ENCODE measurements at regions of chr7 and their contacts with region 1.

Region 1: GRCh38 chr7:46927136-46927810 is 654.6 kb downstream of the TNS3 start:
- DNase-seq: no peak

Region 2: GRCh38 chr7:46854958-46855491 is 72.2 kb before region 1 on chr7:
- intact Hi-C with region 1: no loop called
- DNase-seq: no peak

Region 3: DNA sequence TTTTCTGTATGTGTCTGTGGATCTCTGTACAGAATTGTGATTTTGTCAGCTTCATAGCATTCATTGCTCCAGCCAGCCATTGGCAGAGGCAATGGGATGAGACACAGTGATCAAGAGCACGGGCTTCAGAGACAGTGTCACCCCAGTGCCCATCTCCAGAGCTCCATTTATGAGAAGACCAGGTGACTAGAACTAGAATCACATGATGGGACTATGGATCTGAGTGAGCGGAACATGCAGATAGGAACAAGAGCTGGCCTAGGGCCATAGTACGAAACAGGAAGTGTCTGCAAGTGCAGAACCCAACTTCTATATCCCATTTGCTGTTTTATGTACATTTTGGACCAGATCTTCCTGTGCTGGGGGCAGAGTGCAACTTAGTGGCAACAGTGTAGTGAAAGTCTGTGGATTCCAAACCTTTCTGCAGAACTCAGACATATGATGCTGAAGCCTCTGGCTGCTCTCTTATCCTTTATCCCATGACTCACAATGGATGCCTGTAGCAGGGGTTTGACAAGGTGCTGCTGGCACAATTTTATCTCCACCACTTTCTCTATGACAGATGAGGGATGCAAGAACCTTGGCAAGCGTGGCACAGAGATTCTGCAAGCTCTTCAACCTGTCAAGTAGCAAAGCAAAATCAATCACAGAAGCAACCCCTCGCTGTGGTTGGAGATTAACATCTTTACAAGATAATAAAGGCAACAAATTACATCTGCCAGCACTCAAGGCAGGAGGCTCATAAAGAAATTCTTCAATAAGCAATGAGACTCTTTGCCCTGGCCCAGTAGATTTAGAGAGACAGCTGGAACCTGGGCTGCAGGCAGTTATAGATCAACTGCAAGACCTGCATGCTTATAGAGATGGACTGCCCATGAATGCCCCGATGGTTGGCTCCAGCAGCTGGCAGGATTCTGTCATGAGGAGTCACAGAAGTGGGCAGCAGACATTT is 26.7 kb before region 1 on chr7:
- intact Hi-C with region 1: loop called in 1 of 2 experiments (anchors 1 kb)
- DNase-seq: no peak

Region 4: GRCh38 chr7:46945328-46945727 is 18.1 kb after region 1 on chr7:
- intact Hi-C with region 1: no loop called
- DNase-seq: no peak

Measured in posterior vena cava (tissue), 2 donors.